ENCODE measurements at regions of chr13 and their contacts with region 1.

Region 1: DNA sequence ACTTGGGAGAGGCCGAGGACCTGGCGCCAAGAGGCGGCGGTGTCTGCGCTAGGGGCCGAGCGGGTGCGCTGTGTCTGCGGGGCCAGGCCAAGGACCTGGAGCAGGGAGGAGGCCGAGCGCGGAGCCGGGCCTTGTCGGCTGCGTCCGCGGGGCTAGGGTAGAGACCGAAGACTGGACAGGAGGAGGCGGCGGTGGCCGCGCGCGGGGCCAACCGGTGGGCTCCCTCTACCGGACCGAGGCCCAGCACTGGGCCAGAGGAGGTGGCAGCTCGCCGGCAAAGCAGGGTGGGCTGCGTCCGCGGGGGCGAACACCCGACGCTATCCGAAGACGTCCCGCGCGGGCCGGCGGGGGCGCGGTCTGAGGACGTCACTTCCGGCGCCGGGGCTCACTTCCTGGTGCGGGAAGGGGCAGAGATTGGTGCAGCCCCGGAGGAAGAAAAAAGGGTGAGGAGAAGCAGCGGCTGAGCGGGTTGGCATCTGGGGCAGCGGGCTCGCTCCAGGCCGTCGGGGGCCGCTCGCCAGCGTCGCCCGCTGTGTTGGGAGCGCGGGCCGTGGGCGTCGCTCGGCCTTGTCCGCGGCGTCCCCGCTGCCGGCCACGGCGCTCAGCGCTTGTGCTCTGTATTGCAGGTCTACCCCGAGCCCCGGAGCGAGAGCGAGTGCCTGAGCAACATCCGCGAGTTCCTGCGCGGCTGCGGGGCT is 38.3 kb downstream of the ARHGEF7 start:
- DNase-seq: peak; percentile 92 to 98 (median 97)
- ATAC-seq: peak; percentile 99
- H3K4me3 ChIP-seq: peak overlapping the region; percentile 82
- H3K27ac ChIP-seq: peak overlapping the region; percentile 97
- H3K4me1 ChIP-seq: no peaks in the 10 kb centered on the region
- H3K27me3 ChIP-seq: no peaks in the 10 kb centered on the region

Region 2: DNA sequence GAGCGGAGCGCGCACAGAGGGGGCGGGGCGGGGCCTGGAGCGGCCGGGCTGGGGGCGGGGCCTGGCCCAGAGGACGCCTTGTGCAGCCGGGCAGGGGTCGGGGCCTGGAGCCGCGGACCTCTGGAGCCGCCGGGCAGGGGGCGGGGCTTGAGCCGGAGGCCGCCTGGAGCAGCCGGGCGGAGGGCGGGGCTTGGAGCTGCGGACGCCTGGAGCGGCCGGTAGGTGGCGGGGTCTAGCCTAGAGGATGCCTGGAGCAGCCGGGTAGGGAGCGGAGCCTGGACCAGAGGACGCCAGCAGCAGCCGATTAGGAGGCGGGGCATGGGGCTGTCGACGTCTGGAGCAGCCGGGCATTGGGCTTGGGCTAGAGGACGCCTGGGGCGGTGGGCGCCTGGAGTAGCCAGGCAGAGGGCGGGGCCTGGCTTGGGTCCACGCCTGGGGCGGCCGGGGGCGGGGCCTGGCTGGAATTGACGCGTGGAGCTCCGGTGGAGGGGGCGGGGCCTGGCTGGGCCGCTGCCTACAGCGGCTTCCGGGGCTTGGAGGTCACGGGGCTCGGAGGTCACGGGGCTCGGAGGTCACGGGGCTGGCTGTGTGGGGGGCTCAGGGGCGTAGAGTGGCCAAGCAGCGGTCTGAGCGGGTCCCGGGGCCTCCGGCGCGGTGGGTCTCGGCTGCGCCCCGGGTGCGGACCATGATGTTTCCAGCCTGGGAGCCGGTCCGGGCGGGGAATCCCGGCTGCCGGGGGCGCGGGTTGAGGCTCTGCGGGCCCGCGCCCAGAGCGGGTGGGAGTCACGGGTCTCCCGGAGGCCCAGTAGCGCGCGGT is 238.2 kb before region 1 on chr13 and contains the start of gene ANKRD10:
- intact Hi-C with region 1: loop called in 1 of 4 experiments (anchors 10 kb)
- DNase-seq: peak; percentile 99 to 100 (median 100)
- ATAC-seq: peak; percentile 96
- H3K4me3 ChIP-seq: peak within 1 kb of the TSS; percentile 70
- H3K27ac ChIP-seq: peak within 1 kb of the TSS; percentile 97
- H3K4me1 ChIP-seq: peaks cover 9% of the 10 kb centered on the region
- H3K27me3 ChIP-seq: no peaks in the 10 kb centered on the region
- total RNA-seq, gene ANKRD10: 56.5 to 90.9 (median 61.6) TPM

Region 3: DNA sequence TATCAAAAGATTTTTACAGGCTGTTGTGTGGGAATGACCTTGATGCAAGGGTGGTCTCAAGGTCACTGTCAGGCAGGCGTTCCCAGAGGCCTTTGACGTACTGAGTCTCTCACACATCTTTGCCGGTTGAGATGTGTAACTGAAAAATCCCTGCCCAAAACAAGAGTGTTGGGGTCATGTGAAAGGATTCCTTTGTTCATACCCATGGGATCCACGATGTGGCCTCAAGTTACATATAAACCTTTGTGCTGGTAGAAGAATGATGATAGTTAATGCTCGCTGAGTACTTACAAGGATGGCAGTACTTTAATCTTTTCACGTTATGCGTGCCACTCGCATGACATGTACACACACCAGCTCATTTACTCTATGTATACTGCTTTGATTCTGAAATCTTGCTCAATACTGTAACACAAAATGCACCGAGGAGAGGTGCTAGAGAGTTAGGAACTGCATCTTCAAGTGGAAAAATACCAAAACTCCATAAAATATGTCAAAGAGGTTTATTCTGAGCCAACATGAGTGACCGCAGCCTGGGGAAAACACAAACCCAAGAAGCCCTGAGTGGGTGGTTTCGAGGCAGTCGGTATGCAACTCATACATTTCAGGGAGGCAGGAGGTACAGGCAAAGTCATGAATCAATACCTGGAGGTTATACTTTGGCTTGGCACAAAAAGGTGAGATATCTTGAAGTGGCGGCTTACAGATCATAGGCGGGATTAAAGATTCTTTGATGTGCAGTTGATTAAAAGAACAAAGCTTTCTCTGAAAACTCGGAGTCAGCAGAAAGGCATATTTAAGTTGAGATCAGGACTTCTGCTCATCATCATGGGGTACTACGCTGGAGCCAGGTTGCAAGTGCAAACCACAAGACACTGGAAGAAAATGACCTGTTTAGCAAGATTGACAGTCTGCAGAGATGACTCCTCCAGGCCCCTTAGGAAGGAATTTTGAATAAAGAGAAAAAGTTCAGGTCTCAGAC is 125.7 kb before region 1 on chr13:
- intact Hi-C with region 1: no loop called
- DNase-seq: no peak
- ATAC-seq: no peak
- H3K4me3 ChIP-seq: no peak overlapping the region
- H3K27ac ChIP-seq: no peak overlapping the region
- H3K4me1 ChIP-seq: no peaks in the 10 kb centered on the region
- H3K27me3 ChIP-seq: no peaks in the 10 kb centered on the region

Region 4: GRCh38 chr13:111202745-111203144 is 49.3 kb after region 1 on chr13:
- intact Hi-C with region 1: loop called in 1 of 4 experiments (anchors 5 kb)
- DNase-seq: no peak
- ATAC-seq: peak; percentile 80 to 89
- H3K4me3 ChIP-seq: peak overlapping the region; percentile 45
- H3K27ac ChIP-seq: no peak overlapping the region
- H3K4me1 ChIP-seq: peaks cover 24% of the 10 kb centered on the region
- H3K27me3 ChIP-seq: no peaks in the 10 kb centered on the region

Region 5: GRCh38 chr13:111216166-111216960 is 62.9 kb after region 1 on chr13:
- intact Hi-C with region 1: loop called in 2 of 4 experiments (anchors 5 to 10 kb)
- DNase-seq: peak in 2 of 3 donors; percentile 60 to 63
- ATAC-seq: peak; percentile 38 to 54
- H3K4me3 ChIP-seq: no peak overlapping the region
- H3K27ac ChIP-seq: no peak overlapping the region
- H3K4me1 ChIP-seq: peaks cover 29% of the 10 kb centered on the region
- H3K27me3 ChIP-seq: no peaks in the 10 kb centered on the region

Region 6: GRCh38 chr13:111228262-111229144 is 75.1 kb after region 1 on chr13:
- intact Hi-C with region 1: loop called in 1 of 4 experiments (anchors 5 kb)
- DNase-seq: no peak
- ATAC-seq: no peak
- H3K4me3 ChIP-seq: no peak overlapping the region
- H3K27ac ChIP-seq: no peak overlapping the region
- H3K4me1 ChIP-seq: peaks cover 5% of the 10 kb centered on the region
- H3K27me3 ChIP-seq: no peaks in the 10 kb centered on the region

Measured in right cardiac atrium (tissue), 5 donors.